ENCODE measurements at regions of chr6 and their contacts with region 1.

Region 1: GRCh38 chr6:797479-798077 is 104.6 kb upstream of the EXOC2 start:
- DNase-seq: peak; percentile 33 to 66 (median 48)
- ATAC-seq: peak; percentile 86
- H3K4me3 ChIP-seq: no peak overlapping the region
- H3K27ac ChIP-seq: no peak overlapping the region
- H3K4me1 ChIP-seq: no peaks in the 10 kb centered on the region
- H3K27me3 ChIP-seq: peaks cover 20 to 43% of the 10 kb centered on the region in 2 experiments
- CTCF ChIP-seq: peak; percentile 55 to 80 (median 69); a peak in 5 of 6 replicates
- EP300 ChIP-seq: no peak
- POLR2A ChIP-seq: no peak
- RAD21 ChIP-seq: peak; percentile 90 to 91

Region 2: GRCh38 chr6:1381481-1382330 is 584.1 kb after region 1 on chr6:
- CTCF ChIA-PET with region 1: interaction called, 15 read pairs
- POLR2A ChIA-PET with region 1: no interaction called
- in situ Hi-C with region 1: loop called (anchors 10 kb)
- intact Hi-C with region 1: loop called (anchors 2 kb)
- DNase-seq: peak; percentile 58 to 84 (median 80)
- ATAC-seq: peak; percentile 95
- H3K4me3 ChIP-seq: no peak overlapping the region
- H3K27ac ChIP-seq: no peak overlapping the region
- H3K4me1 ChIP-seq: peaks cover 0 to 37% of the 10 kb centered on the region in 2 experiments; a peak in 2 of 5 replicates
- H3K27me3 ChIP-seq: peaks cover 55 to 94% of the 10 kb centered on the region in 2 experiments
- CTCF ChIP-seq: peak; percentile 64 to 86 (median 71)
- EP300 ChIP-seq: no peak
- POLR2A ChIP-seq: no peak
- RAD21 ChIP-seq: peak; percentile 84 to 88

Region 3: DNA sequence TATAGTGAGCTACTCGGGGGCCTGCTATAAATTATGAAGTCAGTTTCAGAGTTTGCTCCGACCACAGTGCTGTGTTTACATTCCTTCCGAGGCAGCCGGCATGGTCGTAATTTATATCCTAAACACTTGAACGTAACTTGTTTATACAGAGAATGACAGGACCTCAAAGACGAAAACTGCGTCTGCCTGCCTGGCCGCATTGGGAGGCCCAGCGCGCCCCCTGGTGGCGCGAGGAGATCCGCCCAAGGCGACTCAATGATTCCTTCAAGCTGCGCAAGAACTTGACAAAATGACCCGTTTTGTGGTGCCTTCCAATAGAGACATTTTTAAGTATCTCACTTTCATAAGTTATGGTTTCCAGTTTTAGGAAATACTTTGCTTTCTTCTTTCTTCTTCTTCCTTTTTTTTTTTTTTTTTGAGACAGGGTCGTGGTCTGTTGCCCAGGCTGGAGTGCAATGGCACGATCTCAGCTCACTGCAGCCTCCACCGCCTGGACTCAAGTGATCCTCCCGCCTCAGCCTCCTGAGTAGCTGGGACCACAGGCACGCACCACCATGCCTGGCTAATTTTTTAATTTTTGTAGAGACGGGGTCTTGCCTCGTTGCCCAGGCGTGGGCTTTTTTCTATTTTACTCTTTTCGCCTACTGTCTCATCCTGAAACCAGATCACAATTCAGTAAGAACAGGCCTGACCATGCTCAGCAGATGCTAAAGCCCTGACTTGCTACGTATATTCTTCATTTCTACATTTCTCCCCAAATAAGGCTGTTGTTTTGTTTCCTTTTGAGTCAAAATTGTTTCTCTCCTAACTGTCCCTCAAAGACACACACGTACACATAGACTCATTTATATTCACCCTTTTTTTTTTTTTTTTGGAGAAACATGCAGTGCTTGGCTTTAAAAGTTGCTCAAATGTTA is 599.6 kb after region 1 on chr6:
- CTCF ChIA-PET with region 1: interaction called, 7 read pairs
- POLR2A ChIA-PET with region 1: no interaction called
- in situ Hi-C with region 1: no loop called
- intact Hi-C with region 1: loop called (anchors 1 kb)
- DNase-seq: peak; percentile 82 to 87 (median 85)
- ATAC-seq: peak; percentile 95
- H3K4me3 ChIP-seq: no peak overlapping the region
- H3K27ac ChIP-seq: no peak overlapping the region
- H3K4me1 ChIP-seq: peaks cover 0 to 16% of the 10 kb centered on the region in 2 experiments; a peak in 2 of 5 replicates
- H3K27me3 ChIP-seq: peaks cover 48 to 65% of the 10 kb centered on the region in 2 experiments
- CTCF ChIP-seq: peak; percentile 89 to 99 (median 93)
- EP300 ChIP-seq: no peak
- POLR2A ChIP-seq: no peak
- RAD21 ChIP-seq: peak; percentile 77 to 88

Region 4: DNA sequence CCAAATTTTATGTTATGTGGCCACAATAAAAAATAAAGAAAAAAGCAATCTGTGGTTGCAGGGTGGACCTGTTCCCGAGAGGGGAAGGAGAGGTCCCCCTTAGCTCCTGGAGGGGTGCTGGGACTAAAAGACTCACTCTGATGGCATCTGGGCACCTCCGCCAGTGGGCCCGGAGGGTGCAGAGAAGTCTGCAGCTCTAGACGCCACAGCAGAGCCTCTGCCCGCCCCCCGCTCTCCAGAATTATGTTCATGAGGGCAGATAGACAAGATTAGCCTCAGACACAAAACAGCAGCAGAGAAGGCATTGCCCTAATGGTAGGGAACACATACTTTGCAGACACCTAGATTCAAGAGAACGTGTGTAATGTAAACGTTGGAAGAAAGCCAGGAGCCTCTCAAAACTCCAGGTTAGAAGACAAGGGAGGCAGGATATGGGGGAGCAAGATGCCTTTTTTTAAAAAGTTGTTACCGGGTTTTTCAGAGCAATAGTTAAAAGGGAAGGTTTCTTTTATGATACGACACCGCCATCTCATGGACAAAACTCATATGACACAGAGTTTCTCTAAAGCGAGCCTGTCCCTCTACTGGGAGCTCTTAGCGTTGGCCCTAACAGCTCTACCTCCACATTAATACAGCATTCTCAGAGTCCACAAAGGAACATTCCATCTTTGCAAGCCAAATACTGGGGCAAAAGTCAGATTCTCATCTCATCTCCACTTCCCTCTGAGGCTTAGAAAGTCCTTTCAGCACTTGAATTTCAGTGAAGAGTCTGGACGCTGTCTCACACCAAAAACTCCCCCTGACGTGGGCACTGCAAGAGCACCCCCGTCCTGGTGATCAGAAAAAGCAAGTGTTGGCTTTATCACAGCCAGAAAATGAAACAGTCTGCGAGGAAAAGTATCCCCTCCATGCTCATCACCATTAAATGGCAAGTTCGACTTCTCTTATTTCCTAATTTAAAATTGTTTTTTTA is 639.0 kb after region 1 on chr6:
- CTCF ChIA-PET with region 1: interaction called, 13 read pairs
- POLR2A ChIA-PET with region 1: no interaction called
- in situ Hi-C with region 1: no loop called
- intact Hi-C with region 1: loop called (anchors 1 kb)
- DNase-seq: peak; percentile 73 to 79 (median 76)
- ATAC-seq: peak; percentile 99
- H3K4me3 ChIP-seq: no peak overlapping the region
- H3K27ac ChIP-seq: no peak overlapping the region
- H3K4me1 ChIP-seq: no peaks in the 10 kb centered on the region
- H3K27me3 ChIP-seq: peaks cover 2 to 14% of the 10 kb centered on the region in 2 experiments; a peak in 2 of 5 replicates
- CTCF ChIP-seq: peak; percentile 78 to 97 (median 97)
- EP300 ChIP-seq: no peak
- POLR2A ChIP-seq: no peak
- RAD21 ChIP-seq: peak; percentile 77 to 85